ENCODE measurements at regions of chr9 and their contacts with region 1.

Region 1: DNA sequence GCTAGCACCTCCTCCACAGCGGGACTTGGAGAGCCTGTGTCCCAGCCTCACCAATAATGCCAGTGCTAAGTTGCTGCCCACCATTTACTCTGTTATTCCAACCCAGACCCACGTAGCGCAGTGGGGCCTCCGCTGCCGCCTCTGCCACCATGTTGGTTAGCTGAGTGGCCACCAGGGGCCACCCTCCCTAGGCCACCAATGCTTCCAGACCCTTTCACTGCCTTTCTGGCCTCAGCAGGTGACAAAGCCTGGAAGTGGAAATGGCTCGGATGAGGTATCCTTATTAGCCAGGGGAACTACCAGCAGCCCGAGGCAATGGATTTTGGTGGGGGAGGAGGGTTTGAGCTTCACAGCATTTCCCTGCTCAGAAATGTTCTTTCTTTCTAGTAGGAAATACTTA is 110.1 kb downstream of the OSTF1 start:
- H3K4me3 Mint-ChIP-seq: no peak overlapping the region
- H3K27ac Mint-ChIP-seq: no peak overlapping the region
- H3K4me1 Mint-ChIP-seq: no peaks in the 10 kb centered on the region
- H3K27me3 Mint-ChIP-seq: no peaks in the 10 kb centered on the region

Region 2: GRCh38 chr9:76302947-76303940 is 1104.8 kb after region 1 on chr9:
- intact Hi-C with region 1: loop called (anchors 2 kb)
- H3K4me3 Mint-ChIP-seq: no peak overlapping the region
- H3K27ac Mint-ChIP-seq: no peak overlapping the region
- H3K4me1 Mint-ChIP-seq: peaks cover 1% of the 10 kb centered on the region
- H3K27me3 Mint-ChIP-seq: peaks cover 4% of the 10 kb centered on the region